HepG2 (cell line): ENCODE measurements at regions of chr1 and their contacts with region 1.

Region 1: DNA sequence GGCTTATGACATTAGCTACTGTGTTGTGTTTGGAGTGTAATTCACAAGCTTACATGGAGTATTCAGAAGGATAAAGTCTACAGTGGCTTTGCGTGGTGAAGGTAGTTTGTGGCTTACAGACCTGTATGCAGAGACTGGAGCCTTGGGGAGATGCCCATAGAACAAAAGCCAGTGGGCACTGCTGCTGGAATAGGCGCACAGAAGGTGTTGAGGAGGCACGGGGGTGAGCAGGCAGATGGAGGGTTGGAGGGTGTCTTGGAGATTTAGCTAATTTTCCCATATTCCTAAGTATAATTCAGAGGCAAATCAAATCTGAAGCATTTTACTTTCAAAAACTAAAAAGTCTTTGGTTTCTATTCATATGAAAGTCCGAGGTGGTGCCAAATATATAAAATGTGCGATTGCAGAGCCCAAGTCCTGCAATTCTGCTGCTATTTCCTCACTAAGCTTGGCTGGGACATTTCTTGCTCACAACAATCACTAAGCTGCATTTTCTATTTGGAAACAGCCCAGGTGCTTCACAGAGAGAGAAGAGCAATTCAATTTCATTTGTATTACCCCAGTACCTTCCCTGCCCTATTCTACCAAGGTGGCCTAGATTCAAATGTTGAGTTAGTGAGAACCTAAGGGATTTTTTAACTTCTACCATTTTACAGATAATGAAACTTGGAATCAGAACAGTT is 48.5 kb downstream of the FH start:
- DNase-seq: no peak
- ATAC-seq: no peak
- H3K4me3 ChIP-seq: no peak overlapping the region
- H3K27ac ChIP-seq: no peak overlapping the region
- H3K4me1 ChIP-seq: no peaks in the 10 kb centered on the region
- H3K27me3 ChIP-seq: no peaks in the 10 kb centered on the region
- CTCF ChIP-seq: no peak
- EP300 ChIP-seq: no peak
- POLR2A ChIP-seq: no peak
- RAD21 ChIP-seq: no peak

Region 2: GRCh38 chr1:240956020-240956419 is 515.0 kb before region 1 on chr1:
- CTCF ChIA-PET with region 1: no interaction called
- POLR2A ChIA-PET with region 1: no interaction called
- in situ Hi-C with region 1: no loop called
- intact Hi-C with region 1: loop called (anchors 5 kb)
- DNase-seq: no peak
- ATAC-seq: no peak
- H3K4me3 ChIP-seq: no peak overlapping the region
- H3K27ac ChIP-seq: no peak overlapping the region
- H3K4me1 ChIP-seq: no peaks in the 10 kb centered on the region
- H3K27me3 ChIP-seq: no peaks in the 10 kb centered on the region
- CTCF ChIP-seq: no peak
- EP300 ChIP-seq: no peak
- POLR2A ChIP-seq: no peak
- RAD21 ChIP-seq: no peak

Region 3: GRCh38 chr1:241156231-241156965 is 314.7 kb before region 1 on chr1:
- CTCF ChIA-PET with region 1: no interaction called
- POLR2A ChIA-PET with region 1: no interaction called
- in situ Hi-C with region 1: no loop called
- intact Hi-C with region 1: no loop called
- DNase-seq: no peak
- ATAC-seq: peak; percentile 68
- H3K4me3 ChIP-seq: no peak overlapping the region
- H3K27ac ChIP-seq: no peak overlapping the region
- H3K4me1 ChIP-seq: no peaks in the 10 kb centered on the region
- H3K27me3 ChIP-seq: no peaks in the 10 kb centered on the region
- CTCF ChIP-seq: no peak
- EP300 ChIP-seq: no peak
- POLR2A ChIP-seq: no peak
- RAD21 ChIP-seq: no peak

Region 4: GRCh38 chr1:241413386-241413785 is 57.7 kb before region 1 on chr1:
- CTCF ChIA-PET with region 1: no interaction called
- POLR2A ChIA-PET with region 1: no interaction called
- in situ Hi-C with region 1: no loop called
- intact Hi-C with region 1: no loop called
- DNase-seq: no peak
- ATAC-seq: no peak
- H3K4me3 ChIP-seq: no peak overlapping the region
- H3K27ac ChIP-seq: no peak overlapping the region
- H3K4me1 ChIP-seq: no peaks in the 10 kb centered on the region
- H3K27me3 ChIP-seq: no peaks in the 10 kb centered on the region
- CTCF ChIP-seq: no peak
- EP300 ChIP-seq: no peak
- POLR2A ChIP-seq: no peak
- RAD21 ChIP-seq: no peak

Region 5: GRCh38 chr1:241531195-241532161 is 60.4 kb after region 1 on chr1:
- CTCF ChIA-PET with region 1: no interaction called
- POLR2A ChIA-PET with region 1: no interaction called
- in situ Hi-C with region 1: no loop called
- intact Hi-C with region 1: no loop called
- DNase-seq: peak; percentile 71
- ATAC-seq: peak; percentile 96
- H3K4me3 ChIP-seq: peak overlapping the region; percentile 66 to 85 (median 68)
- H3K27ac ChIP-seq: no peak overlapping the region
- H3K4me1 ChIP-seq: 0 out of 2 replicates have a peak, but pooled peaks cover 7% of the 10 kb centered on the region
- H3K27me3 ChIP-seq: no peaks in the 10 kb centered on the region; a peak in 1 of 5 replicates
- CTCF ChIP-seq: peak; percentile 70
- EP300 ChIP-seq: no peak
- POLR2A ChIP-seq: no peak
- RAD21 ChIP-seq: peak; percentile 35; the same call in 1 of the 2 replicates